Heart right ventricle (tissue), 16 donors: ENCODE measurements at regions of chr12 and their contacts with region 1.

Region 1: GRCh38 chr12:60529723-60530122 is 933.9 kb downstream of the SLC16A7 start:
- DNase-seq: no peak
- ATAC-seq: peak in 1 of 8 donors; percentile 38
- H3K4me3 ChIP-seq: no peak overlapping the region
- H3K27ac ChIP-seq: no peak overlapping the region
- H3K4me1 ChIP-seq: no peaks in the 10 kb centered on the region
- H3K27me3 ChIP-seq: no peaks in the 10 kb centered on the region
- CTCF ChIP-seq: no peak

Region 2: DNA sequence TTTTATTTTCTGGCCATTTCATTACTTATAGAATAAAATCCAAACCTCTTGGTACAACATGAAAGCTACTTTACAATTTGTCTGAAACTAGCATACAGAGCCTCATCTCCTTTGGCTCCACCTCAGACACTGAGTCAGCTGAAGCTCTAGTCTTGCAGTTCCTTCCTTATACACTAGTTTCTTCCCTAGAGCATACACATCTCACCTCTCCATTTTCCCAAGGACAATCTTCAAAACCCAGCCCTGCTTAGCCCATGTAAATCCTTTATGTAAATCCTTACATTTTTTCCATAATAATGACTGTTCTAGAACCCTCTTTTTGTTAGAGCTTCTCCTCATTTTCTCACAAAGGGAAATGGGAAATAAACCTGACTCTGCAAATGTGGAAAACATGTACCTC is 470.5 kb before region 1 on chr12:
- intact Hi-C with region 1: loop called in 1 of 10 experiments (anchors 5 kb)
- DNase-seq: no peak
- ATAC-seq: no peak
- H3K4me3 ChIP-seq: no peak overlapping the region
- H3K27ac ChIP-seq: no peak overlapping the region
- H3K4me1 ChIP-seq: no peaks in the 10 kb centered on the region
- H3K27me3 ChIP-seq: no peaks in the 10 kb centered on the region
- CTCF ChIP-seq: no peak